ENCODE measurements at regions of chrX and their contacts with region 1.

Region 1: GRCh38 chrX:154980330-154981096 is 42.0 kb downstream of the F8 start:
- DNase-seq: peak; percentile 78
- H3K4me3 ChIP-seq: peak overlapping the region; percentile 34
- H3K27ac ChIP-seq: no peak overlapping the region
- H3K4me1 ChIP-seq: peaks cover 6% of the 10 kb centered on the region
- CTCF ChIP-seq: peak; percentile 77

Region 2: GRCh38 chrX:154918060-154918483 is 62.4 kb before region 1 on chrX:
- CTCF ChIA-PET with region 1: no interaction called
- POLR2A ChIA-PET with region 1: no interaction called
- intact Hi-C with region 1: loop called (anchors 5 kb)
- DNase-seq: peak; percentile 42
- H3K4me3 ChIP-seq: peak overlapping the region; percentile 29
- H3K27ac ChIP-seq: no peak overlapping the region
- H3K4me1 ChIP-seq: no peaks in the 10 kb centered on the region
- CTCF ChIP-seq: peak; percentile 84

Region 3: GRCh38 chrX:155026726-155027508 is 46.4 kb after region 1 on chrX and contains the start of gene FUNDC2:
- CTCF ChIA-PET with region 1: no interaction called
- POLR2A ChIA-PET with region 1: no interaction called
- intact Hi-C with region 1: loop called (anchors 5 kb)
- DNase-seq: peak; percentile 93
- H3K4me3 ChIP-seq: peak within 1 kb of the TSS; percentile 93
- H3K27ac ChIP-seq: peak within 1 kb of the TSS; percentile 95
- H3K4me1 ChIP-seq: peaks cover 9% of the 10 kb centered on the region
- CTCF ChIP-seq: no peak
- total RNA-seq, gene FUNDC2: 37.2 and 57.5 TPM in 2 replicates

Region 4: GRCh38 chrX:155056877-155057792 is 76.6 kb after region 1 on chrX:
- CTCF ChIA-PET with region 1: no interaction called
- POLR2A ChIA-PET with region 1: no interaction called
- intact Hi-C with region 1: loop called (anchors 1 kb)
- DNase-seq: peak; percentile 45
- H3K4me3 ChIP-seq: no peak overlapping the region
- H3K27ac ChIP-seq: no peak overlapping the region
- H3K4me1 ChIP-seq: no peaks in the 10 kb centered on the region
- CTCF ChIP-seq: peak; percentile 75

Region 5: GRCh38 chrX:155086202-155086840 is 105.8 kb after region 1 on chrX:
- CTCF ChIA-PET with region 1: no interaction called
- POLR2A ChIA-PET with region 1: no interaction called
- intact Hi-C with region 1: loop called (anchors 1 kb)
- DNase-seq: peak; percentile 44
- H3K4me3 ChIP-seq: no peak overlapping the region
- H3K27ac ChIP-seq: no peak overlapping the region
- H3K4me1 ChIP-seq: no peaks in the 10 kb centered on the region
- CTCF ChIP-seq: peak; percentile 69

Region 6: DNA sequence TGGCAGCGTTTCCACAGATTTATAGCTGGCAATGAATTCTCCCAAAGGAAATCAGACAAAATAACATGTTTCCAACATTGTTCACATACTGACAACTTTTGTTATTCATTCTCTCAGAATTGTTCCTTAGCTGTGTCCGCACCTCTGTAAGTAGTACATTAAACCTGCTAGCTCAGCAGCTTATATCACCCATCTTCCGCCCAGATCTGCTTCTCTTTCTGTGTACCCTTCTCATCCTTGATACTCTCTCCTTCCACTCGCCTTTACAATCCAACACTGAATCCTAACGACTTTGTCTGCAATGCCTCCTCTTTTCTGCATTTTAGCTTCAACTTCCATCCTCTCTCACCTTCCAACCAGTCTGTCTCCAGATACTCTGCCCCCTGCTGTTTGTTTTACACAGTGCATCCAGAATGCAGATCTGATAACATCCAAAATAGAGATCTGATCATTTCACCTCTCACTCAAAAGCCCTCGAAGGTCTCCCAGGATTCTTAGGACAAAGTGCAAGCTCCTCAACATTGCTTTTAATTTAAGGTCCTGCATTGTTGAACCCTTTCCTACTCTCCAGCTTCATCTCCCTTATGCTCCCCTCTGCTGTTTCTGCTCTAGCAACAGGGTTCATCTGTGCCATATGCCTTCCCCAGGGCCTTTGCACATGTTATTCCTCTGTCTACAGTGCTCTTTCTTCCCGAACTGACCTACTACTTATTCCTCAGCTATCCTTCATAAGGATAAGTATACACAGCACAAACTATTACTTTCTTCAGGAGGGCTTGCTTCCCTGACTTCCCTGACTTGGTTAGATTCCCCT is 168.4 kb after region 1 on chrX:
- CTCF ChIA-PET with region 1: no interaction called
- POLR2A ChIA-PET with region 1: no interaction called
- intact Hi-C with region 1: loop called (anchors 5 kb)
- DNase-seq: peak; percentile 17
- H3K4me3 ChIP-seq: no peak overlapping the region
- H3K27ac ChIP-seq: no peak overlapping the region
- H3K4me1 ChIP-seq: no peaks in the 10 kb centered on the region
- CTCF ChIP-seq: peak; percentile 70

Region 7: DNA sequence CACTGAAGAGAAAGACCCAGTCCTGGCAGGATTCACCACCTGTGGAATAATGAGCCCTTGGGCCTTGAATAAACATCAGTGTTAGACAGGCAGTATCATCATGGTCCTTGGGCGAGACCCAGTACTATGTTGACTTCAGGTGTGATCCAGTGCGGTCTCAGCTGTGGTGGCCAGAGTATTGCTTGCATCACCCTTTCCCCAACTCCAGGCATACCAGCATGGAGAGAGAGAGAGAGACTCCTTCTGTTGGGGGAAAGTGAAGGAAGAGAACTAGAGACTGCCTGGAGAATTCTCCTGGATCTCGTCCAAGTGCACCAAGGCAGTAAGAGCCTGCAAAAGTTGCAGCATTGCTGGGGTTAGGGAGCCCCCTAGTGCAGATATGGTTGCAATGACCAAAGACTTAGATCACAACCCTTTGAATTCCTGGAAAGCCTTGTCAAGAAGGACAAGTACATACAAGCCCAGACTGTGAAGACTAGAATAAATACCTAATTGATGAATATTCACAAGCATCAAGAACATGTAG is 839.5 kb after region 1 on chrX:
- CTCF ChIA-PET with region 1: no interaction called
- POLR2A ChIA-PET with region 1: no interaction called
- intact Hi-C with region 1: loop called (anchors 2 kb)
- DNase-seq: peak; percentile 51
- H3K4me3 ChIP-seq: no peak overlapping the region
- H3K27ac ChIP-seq: no peak overlapping the region
- H3K4me1 ChIP-seq: no peaks in the 10 kb centered on the region
- CTCF ChIP-seq: peak; percentile 75

Measured in OCI-LY7 (cell line).